Panc1 (cell line): ENCODE measurements at regions of chr6 and their contacts with region 1.

Region 1: DNA sequence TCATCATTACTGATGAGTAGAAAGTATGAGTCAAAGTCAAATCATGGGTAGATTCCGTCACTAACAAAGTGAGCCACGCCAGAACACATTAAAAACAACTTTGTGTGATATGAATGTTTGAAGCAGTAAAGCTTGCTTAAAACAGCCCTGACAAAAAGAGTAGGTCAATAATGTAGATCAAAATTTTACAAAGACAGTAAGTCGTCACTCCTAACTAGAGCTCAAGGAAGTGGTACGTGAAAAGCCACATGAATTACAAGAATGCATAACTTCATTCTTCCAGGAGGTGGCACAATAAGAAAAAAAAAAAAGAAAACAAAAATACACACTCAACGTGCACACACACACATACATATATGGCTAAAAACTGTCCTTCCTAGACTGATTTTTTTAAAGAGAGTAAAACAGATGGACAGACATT is 69.9 kb downstream of the HACE1 start:
- DNase-seq: peak; percentile 22
- ATAC-seq: peak; percentile 74
- H3K4me3 ChIP-seq: no peak overlapping the region
- H3K27ac ChIP-seq: no peak overlapping the region; the same call in 1 of the 2 replicates
- H3K4me1 ChIP-seq: peaks cover 8% of the 10 kb centered on the region; the same call in 1 of the 2 replicates
- H3K27me3 ChIP-seq: no peaks in the 10 kb centered on the region
- CTCF ChIP-seq: peak; percentile 63; the same call in 1 of the 2 replicates

Region 2: DNA sequence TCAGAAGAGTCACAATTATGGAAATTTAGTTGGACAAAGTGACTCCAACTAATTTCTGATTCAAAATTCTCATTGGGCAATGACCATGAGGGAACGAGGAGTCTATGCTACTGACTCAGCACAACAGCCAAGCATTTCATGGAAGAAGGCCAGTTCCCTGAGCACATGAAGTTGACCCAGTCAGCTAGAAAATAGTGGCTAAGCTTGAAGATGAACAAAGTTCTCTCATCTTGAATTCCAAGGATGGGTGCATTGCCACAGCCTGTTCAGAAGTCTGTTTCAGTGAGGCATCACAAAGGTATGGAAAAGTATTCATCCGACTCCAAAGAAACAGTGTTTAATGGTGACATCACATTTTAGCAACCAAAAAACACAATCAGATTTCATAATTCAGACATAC is 607.0 kb before region 1 on chr6:
- CTCF ChIA-PET with region 1: no interaction called
- POLR2A ChIA-PET with region 1: no interaction called
- in situ Hi-C with region 1: no loop called
- intact Hi-C with region 1: no loop called
- DNase-seq: no peak
- ATAC-seq: no peak
- H3K4me3 ChIP-seq: no peak overlapping the region
- H3K27ac ChIP-seq: no peak overlapping the region
- H3K4me1 ChIP-seq: no peaks in the 10 kb centered on the region
- H3K27me3 ChIP-seq: no peaks in the 10 kb centered on the region
- CTCF ChIP-seq: no peak

Region 3: DNA sequence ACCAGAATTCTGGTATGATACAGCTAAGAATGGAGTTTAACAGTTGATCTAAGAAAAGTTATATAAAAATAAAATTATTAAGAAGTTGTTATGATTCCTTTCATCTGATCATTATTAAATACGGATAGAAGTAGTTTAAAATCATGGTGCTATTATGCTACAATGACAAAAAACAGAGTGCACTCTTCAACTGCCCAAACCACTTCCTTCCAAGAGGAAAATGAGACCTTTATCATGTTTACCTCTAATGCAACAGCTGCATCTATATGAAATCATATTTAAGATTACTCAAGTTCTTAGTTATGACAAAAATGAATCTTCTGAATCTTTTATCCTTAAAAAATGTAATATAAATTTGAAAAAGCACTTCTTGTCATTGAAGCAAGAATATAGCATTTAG is 38.7 kb after region 1 on chr6:
- CTCF ChIA-PET with region 1: no interaction called
- POLR2A ChIA-PET with region 1: no interaction called
- in situ Hi-C with region 1: no loop called
- intact Hi-C with region 1: no loop called
- DNase-seq: no peak
- ATAC-seq: no peak
- H3K4me3 ChIP-seq: no peak overlapping the region
- H3K27ac ChIP-seq: no peak overlapping the region
- H3K4me1 ChIP-seq: no peaks in the 10 kb centered on the region
- H3K27me3 ChIP-seq: no peaks in the 10 kb centered on the region
- CTCF ChIP-seq: no peak

Region 4: GRCh38 chr6:104955927-104956730 is 166.3 kb after region 1 on chr6:
- CTCF ChIA-PET with region 1: no interaction called
- POLR2A ChIA-PET with region 1: no interaction called
- in situ Hi-C with region 1: no loop called
- intact Hi-C with region 1: loop called (anchors 5 kb)
- DNase-seq: no peak
- ATAC-seq: peak; percentile 57
- H3K4me3 ChIP-seq: peak overlapping the region; percentile 71 to 86
- H3K27ac ChIP-seq: peak overlapping the region; percentile 97
- H3K4me1 ChIP-seq: peaks cover 15% of the 10 kb centered on the region
- H3K27me3 ChIP-seq: no peaks in the 10 kb centered on the region; the same call in 1 of the 2 replicates
- CTCF ChIP-seq: peak; percentile 52

Region 5: GRCh38 chr6:105077596-105078385 is 288.0 kb after region 1 on chr6:
- CTCF ChIA-PET with region 1: interaction called, 31 read pairs
- POLR2A ChIA-PET with region 1: no interaction called
- in situ Hi-C with region 1: no loop called
- intact Hi-C with region 1: loop called (anchors 2 kb)
- DNase-seq: no peak
- ATAC-seq: peak; percentile 72; the same call in 1 of the 2 replicates
- H3K4me3 ChIP-seq: no peak overlapping the region
- H3K27ac ChIP-seq: no peak overlapping the region
- H3K4me1 ChIP-seq: peaks cover under 1% of the 10 kb centered on the region; the same call in 1 of the 2 replicates
- H3K27me3 ChIP-seq: no peaks in the 10 kb centered on the region
- CTCF ChIP-seq: peak; percentile 60; the same call in 1 of the 2 replicates

Region 6: GRCh38 chr6:105431226-105431625 is 641.4 kb after region 1 on chr6:
- CTCF ChIA-PET with region 1: interaction called, 11 read pairs
- POLR2A ChIA-PET with region 1: no interaction called
- in situ Hi-C with region 1: no loop called
- intact Hi-C with region 1: no loop called
- DNase-seq: no peak
- ATAC-seq: no peak
- H3K4me3 ChIP-seq: no peak overlapping the region
- H3K27ac ChIP-seq: peak overlapping the region; percentile 60
- H3K4me1 ChIP-seq: peaks cover 15% of the 10 kb centered on the region
- H3K27me3 ChIP-seq: no peaks in the 10 kb centered on the region
- CTCF ChIP-seq: peak; percentile 77

Region 7: GRCh38 chr6:105569706-105570105 is 779.9 kb after region 1 on chr6:
- CTCF ChIA-PET with region 1: no interaction called
- POLR2A ChIA-PET with region 1: interaction called, 11 read pairs
- in situ Hi-C with region 1: no loop called
- intact Hi-C with region 1: no loop called
- DNase-seq: no peak
- ATAC-seq: no peak
- H3K4me3 ChIP-seq: no peak overlapping the region
- H3K27ac ChIP-seq: no peak overlapping the region; the same call in 1 of the 2 replicates
- H3K4me1 ChIP-seq: no peaks in the 10 kb centered on the region
- H3K27me3 ChIP-seq: no peaks in the 10 kb centered on the region
- CTCF ChIP-seq: no peak